Posterior cingulate gyrus (tissue), 11 donors: ENCODE measurements at regions of chr11 and their contacts with region 1.

Region 1: DNA sequence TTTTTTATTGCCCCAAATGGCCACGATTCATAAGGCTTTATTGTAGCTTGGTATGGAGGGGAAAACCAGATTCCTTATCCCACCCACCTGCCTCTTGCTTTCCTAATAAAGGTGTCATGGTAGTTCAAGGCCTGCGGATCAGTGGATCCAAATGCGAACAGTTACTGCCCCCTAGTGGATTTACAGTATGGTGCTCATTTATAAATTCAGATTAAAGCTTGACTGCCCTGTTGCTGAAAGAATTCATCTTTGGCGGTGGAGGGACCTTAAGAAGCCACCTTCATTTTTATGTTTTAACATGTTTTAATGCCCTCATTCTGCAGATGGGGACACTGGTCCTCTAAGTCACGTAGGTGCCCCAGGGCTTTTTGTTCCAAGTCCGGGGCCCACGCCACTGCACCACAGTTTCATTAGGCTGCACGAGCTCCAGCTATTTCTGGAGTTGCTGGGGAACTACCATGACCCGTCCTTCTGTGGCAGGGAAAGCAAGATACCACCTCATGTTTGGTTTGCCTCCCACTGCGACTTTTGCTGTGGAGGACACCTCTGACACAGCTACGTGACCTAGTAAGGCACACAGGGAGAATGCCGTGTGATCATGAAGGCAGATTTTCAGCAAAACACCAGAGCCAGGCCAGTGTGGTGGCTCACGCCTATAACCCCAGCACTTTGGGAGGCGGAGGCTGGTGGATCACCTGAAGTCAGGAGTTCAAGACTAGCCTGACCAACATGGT is 15.6 kb upstream of the INCENP start:
- DNase-seq: peak in 3 of 10 donors; percentile 17 to 78 (median 28)

Region 2: GRCh38 chr11:61797263-61797944 is 310.8 kb before region 1 on chr11:
- intact Hi-C with region 1: loop called (anchors 2 kb)
- DNase-seq: peak in 6 of 10 donors; percentile 80 to 94 (median 84)

Region 3: DNA sequence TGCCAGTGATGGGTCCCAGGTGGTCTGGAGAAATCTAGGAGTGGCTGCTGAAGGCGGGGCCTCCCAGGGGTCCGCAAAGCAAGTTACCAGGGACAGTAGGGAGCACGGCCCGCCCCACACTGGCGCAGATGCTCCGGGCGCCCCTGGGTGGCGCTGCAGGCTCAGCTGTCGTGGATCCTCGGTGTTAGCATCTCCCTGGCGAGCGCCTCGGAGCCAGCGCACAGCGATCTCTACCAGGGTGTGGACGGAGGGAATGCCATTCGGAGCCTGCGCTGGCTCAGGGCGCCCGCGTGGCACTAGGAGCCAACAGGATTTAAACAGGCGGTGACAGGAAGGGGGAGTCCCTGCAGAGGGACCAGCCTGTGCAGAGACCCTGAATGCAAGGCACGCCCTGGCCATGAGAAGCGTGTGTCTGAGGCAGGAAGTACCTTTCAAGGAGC is 237.0 kb before region 1 on chr11:
- intact Hi-C with region 1: loop called (anchors 2 kb)
- DNase-seq: peak; percentile 59 to 98 (median 86)

Region 4: DNA sequence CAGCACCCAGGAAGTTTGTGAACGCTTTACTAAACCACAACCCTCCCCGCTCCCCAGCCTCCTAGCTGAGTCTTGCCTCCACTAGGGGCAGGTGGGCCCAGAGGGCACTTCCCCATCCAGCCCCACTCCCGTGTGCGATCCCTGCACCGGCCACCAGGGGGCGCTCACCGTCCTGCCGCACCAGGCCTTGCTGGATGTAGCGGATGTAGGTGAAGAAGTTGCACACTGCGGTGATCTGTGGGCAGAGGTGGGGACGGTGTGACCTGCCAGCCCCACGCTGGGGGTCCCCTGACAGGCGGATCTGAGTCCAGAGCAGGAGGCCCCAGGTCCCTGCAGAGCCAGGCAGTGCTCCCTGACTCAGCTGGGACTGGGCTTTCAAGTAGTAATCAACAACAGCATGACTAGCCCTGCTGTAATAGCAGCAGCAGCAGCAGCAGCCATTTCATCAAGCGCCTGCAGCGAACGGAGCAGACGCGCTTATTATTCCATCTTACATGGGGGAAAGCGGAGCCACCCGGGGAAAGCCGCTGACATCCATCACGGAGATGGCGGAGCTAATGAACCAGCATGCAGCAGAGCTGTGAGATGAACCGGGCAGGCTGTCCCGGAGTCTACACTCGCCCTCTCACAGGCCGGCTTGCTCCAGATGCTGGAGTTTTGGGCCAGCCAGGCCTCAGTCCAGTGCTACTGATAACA is 208.9 kb before region 1 on chr11:
- intact Hi-C with region 1: loop called (anchors 1 kb)
- DNase-seq: peak; percentile 56 to 95 (median 80)

Region 5: DNA sequence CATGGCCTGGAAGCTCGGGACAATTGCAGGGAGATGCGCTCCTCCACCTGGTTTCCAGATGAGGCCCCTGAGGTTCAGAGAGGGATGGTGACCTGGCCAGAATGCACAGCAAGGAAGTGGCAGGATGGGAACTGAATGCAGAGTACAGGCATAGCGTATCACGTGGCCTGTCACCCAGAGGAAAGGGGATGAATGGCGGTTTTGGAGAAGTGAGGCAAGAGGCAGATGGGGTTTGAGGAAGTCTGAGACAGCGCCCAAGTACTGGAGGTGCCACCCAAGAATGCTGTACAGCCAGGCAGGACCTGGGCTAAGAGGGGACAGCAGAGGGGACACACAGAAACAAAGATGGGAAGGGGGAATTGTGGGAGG is 195.7 kb before region 1 on chr11:
- intact Hi-C with region 1: no loop called
- DNase-seq: peak in 4 of 10 donors; percentile 25 to 60 (median 50)

Region 6: DNA sequence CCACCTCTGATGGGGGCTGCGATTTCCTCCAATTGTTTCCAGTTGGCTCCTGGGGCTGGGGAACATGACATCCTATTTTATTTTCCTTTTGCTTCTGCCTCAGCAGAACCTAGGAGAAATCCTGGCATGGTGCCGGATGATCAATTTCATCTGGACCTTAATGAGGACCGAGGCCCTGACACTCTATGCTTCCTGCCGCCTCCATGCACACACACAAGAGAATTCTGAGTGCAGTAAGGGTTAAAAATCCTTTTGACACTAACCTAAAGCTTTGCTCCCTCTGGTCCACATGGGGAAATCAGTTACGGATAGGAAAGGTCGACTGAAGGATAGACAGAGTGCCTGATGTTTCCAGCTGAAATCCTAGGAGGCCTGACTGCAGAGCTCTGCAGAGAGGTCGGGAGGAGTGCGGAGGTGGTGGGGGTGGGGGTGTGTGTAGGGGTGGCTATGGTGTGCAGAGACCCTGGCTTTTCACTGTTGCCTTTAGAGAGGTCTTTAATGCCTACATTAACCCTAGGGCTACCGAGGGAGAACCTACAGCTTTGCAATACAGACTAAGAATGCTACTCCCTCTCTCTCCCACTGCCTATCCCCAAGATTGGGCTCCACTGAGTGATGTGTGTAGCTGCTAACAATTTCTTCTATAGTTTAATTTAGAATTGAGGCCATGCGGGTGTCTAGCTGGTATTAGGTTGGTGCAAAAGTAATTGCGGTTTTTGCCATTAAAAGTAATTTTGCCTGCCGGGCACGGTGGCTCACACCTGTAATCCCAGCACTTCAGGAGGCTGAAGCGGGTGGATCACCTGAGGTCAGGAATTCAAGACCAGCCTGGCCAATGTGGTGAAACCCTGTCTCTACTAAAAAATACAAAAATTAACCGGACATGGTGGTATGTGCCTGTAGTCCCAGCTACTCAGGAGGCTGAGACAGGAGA is 37.9 kb before region 1 on chr11:
- intact Hi-C with region 1: no loop called
- DNase-seq: peak in 1 of 10 donors; percentile 60

Region 7: DNA sequence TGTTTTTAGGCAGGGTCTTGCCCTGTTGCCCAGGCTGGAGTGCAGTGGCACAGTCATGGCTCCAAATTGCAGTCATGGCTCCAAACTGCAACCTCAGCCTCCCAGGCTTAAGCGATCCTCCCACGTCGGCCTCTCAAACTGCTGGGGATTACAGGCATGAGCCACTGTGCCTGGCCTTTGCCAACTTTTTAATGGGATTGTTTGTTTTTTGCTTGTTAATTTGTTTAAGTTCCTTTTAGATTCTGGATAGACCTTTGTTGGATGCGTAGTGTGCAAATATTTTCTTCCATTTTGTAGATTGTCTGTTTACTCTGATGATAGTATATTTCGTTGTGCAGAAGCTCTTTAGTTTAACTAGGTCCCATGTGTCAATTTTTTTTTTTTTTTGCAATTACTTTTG is 71.8 kb after region 1 on chr11:
- intact Hi-C with region 1: no loop called
- DNase-seq: no peak

Region 8: GRCh38 chr11:62201370-62201769 is 93.2 kb after region 1 on chr11:
- intact Hi-C with region 1: no loop called
- DNase-seq: no peak